ENCODE measurements at regions of chr7 and their contacts with region 1.

Region 1: GRCh38 chr7:106461993-106462859 is 177.4 kb upstream of the NAMPT start:
- DNase-seq: no peak
- H3K4me3 ChIP-seq: no peak overlapping the region
- H3K27ac ChIP-seq: no peak overlapping the region
- H3K4me1 ChIP-seq: peaks cover 0 to 6% (median 0%) of the 10 kb centered on the region in 4 donors
- H3K27me3 ChIP-seq: no peaks in the 10 kb centered on the region
- CTCF ChIP-seq: peak; percentile 61 to 78 (median 65)
- EP300 ChIP-seq: no peak
- POLR2A ChIP-seq: no peak

Region 2: GRCh38 chr7:105940104-105940503 is 522.1 kb before region 1 on chr7:
- in situ Hi-C with region 1: no loop called
- intact Hi-C with region 1: no loop called
- DNase-seq: no peak
- H3K4me3 ChIP-seq: no peak overlapping the region
- H3K27ac ChIP-seq: no peak overlapping the region
- H3K4me1 ChIP-seq: no peaks in the 10 kb centered on the region
- H3K27me3 ChIP-seq: no peaks in the 10 kb centered on the region
- CTCF ChIP-seq: no peak
- EP300 ChIP-seq: no peak
- POLR2A ChIP-seq: no peak

Region 3: DNA sequence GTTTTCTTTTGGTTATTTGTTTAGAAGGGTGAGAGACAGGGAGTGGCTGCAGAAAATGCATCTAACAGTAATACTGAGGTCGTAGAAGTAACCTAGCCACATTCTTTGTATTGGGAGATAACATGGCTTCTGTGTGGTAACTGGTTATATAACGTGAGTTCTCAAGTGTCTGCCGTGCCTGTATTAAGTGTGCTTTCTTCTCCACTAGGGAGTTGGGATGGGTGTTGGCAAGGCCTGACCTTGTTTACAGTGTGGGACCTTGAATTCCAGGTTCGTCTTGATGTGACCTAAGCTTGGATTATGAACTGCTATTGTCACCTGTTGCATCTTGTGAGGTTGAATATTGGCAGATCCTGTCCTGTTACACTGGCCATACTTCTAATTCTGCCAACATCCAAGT is 32.1 kb before region 1 on chr7:
- in situ Hi-C with region 1: no loop called
- intact Hi-C with region 1: loop called (anchors 1 kb)
- DNase-seq: no peak
- H3K4me3 ChIP-seq: no peak overlapping the region
- H3K27ac ChIP-seq: no peak overlapping the region
- H3K4me1 ChIP-seq: peaks cover 6 to 12% (median 7%) of the 10 kb centered on the region in 4 donors
- H3K27me3 ChIP-seq: no peaks in the 10 kb centered on the region
- CTCF ChIP-seq: no peak
- EP300 ChIP-seq: no peak
- POLR2A ChIP-seq: no peak

Measured in transverse colon (tissue), 4 donors.